Common myeloid progenitor, CD34-positive (primary cell): ENCODE measurements at regions of chr2 and their contacts with region 1.

Region 1: GRCh38 chr2:66494708-66495107 is 59.8 kb downstream of the MEIS1 start:
- DNase-seq: peak; percentile 51 to 88 (median 84)
- H3K4me3 ChIP-seq: peak overlapping the region in 2 of 7 experiments; percentile 6 to 24
- H3K27ac ChIP-seq: peak overlapping the region; percentile 19 to 72
- H3K4me1 ChIP-seq: peaks cover 30 to 82% (median 55%) of the 10 kb centered on the region in 4 experiments
- H3K27me3 ChIP-seq: no peaks in the 10 kb centered on the region

Region 2: DNA sequence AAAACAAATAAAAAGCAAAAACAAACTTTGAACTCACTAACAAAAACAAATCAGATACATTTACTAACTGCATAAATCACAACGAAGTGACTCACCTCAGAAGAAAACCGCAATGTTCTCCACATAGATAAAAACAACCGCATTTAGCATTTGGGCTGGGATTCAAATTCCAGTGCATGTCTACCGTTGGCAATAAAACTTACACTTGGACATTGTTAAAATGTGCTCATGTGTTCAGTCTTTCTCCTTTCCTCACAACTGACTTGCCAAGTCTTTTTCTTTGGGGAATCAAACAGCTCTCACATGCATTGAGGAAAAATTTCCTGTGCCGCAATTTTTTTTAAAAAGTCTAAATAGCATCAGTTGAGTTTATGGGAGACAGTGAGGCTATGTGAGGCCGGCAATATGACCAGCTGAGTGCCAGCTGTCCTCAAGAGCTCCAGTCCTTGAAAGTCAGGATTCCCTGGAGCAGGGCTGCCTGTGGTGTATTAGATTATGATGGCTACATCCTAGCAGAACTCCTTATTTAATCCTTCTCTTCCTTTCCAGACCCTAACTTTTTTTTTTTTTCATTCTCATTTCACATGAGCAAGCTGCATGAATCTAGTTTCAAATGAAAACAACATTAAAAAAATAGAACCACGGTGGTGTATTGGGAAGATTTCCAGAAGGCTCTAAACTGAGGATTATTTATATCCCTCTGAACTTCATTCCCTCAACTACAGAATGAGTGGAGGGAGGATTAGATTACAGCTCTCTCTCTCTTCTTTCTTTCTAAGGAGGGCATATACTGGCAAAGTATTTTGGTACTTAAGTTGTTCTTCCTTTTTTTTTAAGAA is 130.0 kb before region 1 on chr2:
- CTCF ChIA-PET with region 1: no interaction called
- POLR2A ChIA-PET with region 1: no interaction called
- DNase-seq: no peak
- H3K4me3 ChIP-seq: no peak overlapping the region
- H3K27ac ChIP-seq: no peak overlapping the region
- H3K4me1 ChIP-seq: no peaks in the 10 kb centered on the region
- H3K27me3 ChIP-seq: peaks cover 0 to 2% (median 0%) of the 10 kb centered on the region in 5 experiments

Region 3: GRCh38 chr2:66389651-66390131 is 105.0 kb before region 1 on chr2:
- CTCF ChIA-PET with region 1: no interaction called
- POLR2A ChIA-PET with region 1: no interaction called
- DNase-seq: peak in 2 of 3 donors; percentile 2 to 8
- H3K4me3 ChIP-seq: no peak overlapping the region
- H3K27ac ChIP-seq: no peak overlapping the region
- H3K4me1 ChIP-seq: no peaks in the 10 kb centered on the region
- H3K27me3 ChIP-seq: no peaks in the 10 kb centered on the region

Region 4: DNA sequence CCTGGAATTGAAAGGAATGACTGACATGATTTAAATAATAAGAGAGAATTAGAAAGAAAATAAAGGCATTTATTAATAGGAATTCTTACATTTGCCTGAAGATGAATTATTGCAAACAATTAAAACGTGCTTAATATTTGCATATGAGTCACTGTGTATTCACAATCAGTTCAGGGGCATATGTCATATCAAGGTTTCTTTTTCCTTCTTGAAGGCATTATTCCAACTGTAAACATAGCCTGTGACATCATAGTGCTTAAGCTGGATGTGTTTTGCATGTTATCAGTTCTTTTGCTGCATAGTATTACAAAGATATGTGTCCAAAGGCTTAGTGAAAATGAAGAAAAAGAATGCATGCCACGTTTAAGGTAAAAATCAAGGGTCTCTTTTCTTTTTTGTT is 21.0 kb after region 1 on chr2:
- CTCF ChIA-PET with region 1: interaction called, 14 read pairs
- POLR2A ChIA-PET with region 1: no interaction called
- DNase-seq: peak in 1 of 3 donors; percentile 49
- H3K4me3 ChIP-seq: no peak overlapping the region
- H3K27ac ChIP-seq: peak overlapping the region in 1 of 2 experiments; percentile 3
- H3K4me1 ChIP-seq: peaks cover 0 to 8% (median 1%) of the 10 kb centered on the region in 4 experiments
- H3K27me3 ChIP-seq: no peaks in the 10 kb centered on the region